AG04449 (cell line): ENCODE measurements at regions of chr12 and their contacts with region 1.

Region 1: GRCh38 chr12:19186722-19187661 is 57.5 kb downstream of the PLEKHA5 start:
- DNase-seq: no peak
- H3K4me3 ChIP-seq: no peak overlapping the region
- CTCF ChIP-seq: peak; percentile 43

Region 2: GRCh38 chr12:18250313-18250916 is 936.6 kb before region 1 on chr12:
- CTCF ChIA-PET with region 1: interaction called, 21 read pairs
- POLR2A ChIA-PET with region 1: no interaction called
- DNase-seq: peak; percentile 23
- H3K4me3 ChIP-seq: no peak overlapping the region
- CTCF ChIP-seq: peak; percentile 43

Region 3: DNA sequence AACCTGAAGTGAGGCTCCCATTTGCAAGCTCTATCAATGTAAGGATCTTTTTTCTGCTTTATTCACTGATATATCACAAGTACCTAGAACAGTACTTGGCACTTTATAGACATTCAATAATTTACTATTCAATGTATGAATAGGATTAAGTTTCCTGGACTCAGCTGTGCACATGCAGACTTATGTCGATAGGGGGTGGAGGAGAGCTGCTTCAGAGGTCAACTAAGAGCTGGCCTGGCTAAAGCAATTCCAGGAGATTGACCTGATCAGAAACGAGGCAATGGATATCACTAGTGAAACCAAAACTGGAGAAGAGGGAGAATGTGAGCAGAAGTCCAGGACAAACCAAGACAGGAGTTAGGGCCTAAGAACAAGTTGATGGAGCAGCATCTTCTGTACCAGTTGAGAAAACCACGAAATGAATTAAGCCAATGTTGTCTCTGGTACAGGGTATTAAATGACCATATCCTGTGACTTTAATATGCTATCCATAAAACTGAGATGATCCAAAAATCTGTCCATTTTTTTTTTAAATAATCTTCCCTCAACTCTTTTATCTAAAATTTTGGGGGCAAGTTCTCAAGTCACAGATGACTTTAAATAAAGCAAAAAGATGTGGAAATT is 756.5 kb before region 1 on chr12:
- CTCF ChIA-PET with region 1: interaction called, 32 read pairs
- POLR2A ChIA-PET with region 1: no interaction called
- DNase-seq: peak; percentile 19
- H3K4me3 ChIP-seq: no peak overlapping the region
- CTCF ChIP-seq: peak; percentile 77

Region 4: GRCh38 chr12:18861287-18861858 is 325.6 kb before region 1 on chr12:
- CTCF ChIA-PET with region 1: interaction called, 20 read pairs
- POLR2A ChIA-PET with region 1: no interaction called
- DNase-seq: no peak
- H3K4me3 ChIP-seq: no peak overlapping the region
- CTCF ChIP-seq: peak; percentile 12

Region 5: DNA sequence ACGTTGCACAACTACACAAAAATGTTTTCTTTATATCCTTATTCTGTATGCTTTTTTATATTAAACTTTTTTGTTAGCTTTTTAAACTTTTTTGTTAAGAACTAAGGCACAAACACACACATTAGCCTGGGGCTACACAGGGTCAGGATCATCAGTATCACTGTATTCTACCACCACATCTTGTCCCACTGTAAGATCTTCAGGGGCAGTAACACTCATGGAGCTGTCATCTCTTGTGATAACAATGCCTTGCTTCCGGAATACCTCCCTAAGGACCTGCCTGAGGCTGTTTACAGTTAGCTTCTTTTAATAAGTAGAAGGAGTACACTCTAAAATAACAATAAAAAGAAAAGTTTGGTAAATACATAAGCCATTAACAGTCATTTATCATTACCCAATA is 15.3 kb before region 1 on chr12:
- CTCF ChIA-PET with region 1: interaction called, 22 read pairs
- POLR2A ChIA-PET with region 1: no interaction called
- DNase-seq: no peak
- H3K4me3 ChIP-seq: no peak overlapping the region
- CTCF ChIP-seq: no peak

Region 6: GRCh38 chr12:19198272-19198671 is 11.3 kb after region 1 on chr12:
- CTCF ChIA-PET with region 1: interaction called, 28 read pairs
- POLR2A ChIA-PET with region 1: no interaction called
- DNase-seq: no peak
- H3K4me3 ChIP-seq: no peak overlapping the region
- CTCF ChIP-seq: no peak